ENCODE measurements at regions of chr11 and their contacts with region 1.

Region 1: GRCh38 chr11:7665473-7666291 is 7.6 kb downstream of the CYB5R2 start:
- DNase-seq: peak; percentile 34
- ATAC-seq: peak; percentile 100
- H3K4me3 ChIP-seq: no peak overlapping the region
- H3K27ac ChIP-seq: no peak overlapping the region
- H3K4me1 ChIP-seq: peaks cover 11% of the 10 kb centered on the region
- H3K27me3 ChIP-seq: no peaks in the 10 kb centered on the region
- CTCF ChIP-seq: peak; percentile 94 to 97 (median 96)
- EP300 ChIP-seq: no peak
- POLR2A ChIP-seq: peak; percentile 62
- RAD21 ChIP-seq: peak; percentile 86

Region 2: GRCh38 chr11:7098235-7098832 is 567.3 kb before region 1 on chr11:
- CTCF ChIA-PET with region 1: interaction called, 11 read pairs
- POLR2A ChIA-PET with region 1: no interaction called
- RAD21 ChIA-PET with region 1: interaction called, 9 read pairs
- SMC1A ChIA-PET with region 1: interaction called, 3 read pairs
- in situ Hi-C with region 1: no loop called
- intact Hi-C with region 1: no loop called
- DNase-seq: peak; percentile 40
- ATAC-seq: peak; percentile 95
- H3K4me3 ChIP-seq: no peak overlapping the region
- H3K27ac ChIP-seq: no peak overlapping the region
- H3K4me1 ChIP-seq: no peaks in the 10 kb centered on the region
- H3K27me3 ChIP-seq: no peaks in the 10 kb centered on the region
- CTCF ChIP-seq: peak; percentile 58 to 74 (median 63); a peak in 5 of 6 replicates
- EP300 ChIP-seq: no peak
- POLR2A ChIP-seq: no peak
- RAD21 ChIP-seq: peak; percentile 94

Region 3: DNA sequence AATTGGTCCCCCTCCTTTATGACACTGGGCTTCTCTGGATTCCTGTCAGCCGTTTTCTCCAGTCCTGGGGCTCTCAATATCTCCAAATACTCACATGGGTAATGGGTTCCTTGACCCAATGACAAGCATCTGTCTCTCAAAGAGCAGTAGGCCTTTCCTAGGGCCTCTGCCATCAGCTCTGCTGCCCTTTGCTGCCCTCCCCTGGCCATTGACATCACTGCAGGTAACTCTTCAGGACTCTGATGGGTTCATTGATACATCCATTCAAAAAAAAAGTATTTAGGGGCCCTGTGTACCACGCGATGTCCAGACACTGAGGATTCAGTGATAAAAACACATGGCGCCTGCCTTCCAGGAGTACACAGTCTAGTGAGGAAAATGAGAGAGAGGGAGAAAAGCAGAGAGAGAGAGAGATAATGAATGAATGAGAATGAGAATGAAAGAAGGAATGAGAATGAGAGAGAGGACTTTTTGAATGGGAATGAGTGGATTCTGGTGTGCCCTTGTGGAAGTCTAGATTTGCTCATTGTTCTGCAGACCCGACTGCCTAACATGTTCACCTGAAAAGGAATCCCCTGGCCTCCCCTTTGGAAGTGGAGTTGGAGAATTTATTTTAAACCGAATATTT is 223.0 kb before region 1 on chr11:
- CTCF ChIA-PET with region 1: interaction called, 6 read pairs
- POLR2A ChIA-PET with region 1: no interaction called
- RAD21 ChIA-PET with region 1: interaction called, 15 read pairs
- SMC1A ChIA-PET with region 1: interaction called, 15 read pairs
- in situ Hi-C with region 1: no loop called
- intact Hi-C with region 1: loop called (anchors 2 kb)
- DNase-seq: peak; percentile 30
- ATAC-seq: peak; percentile 98
- H3K4me3 ChIP-seq: no peak overlapping the region
- H3K27ac ChIP-seq: no peak overlapping the region
- H3K4me1 ChIP-seq: no peaks in the 10 kb centered on the region
- H3K27me3 ChIP-seq: no peaks in the 10 kb centered on the region
- CTCF ChIP-seq: peak; percentile 86 to 92 (median 90)
- EP300 ChIP-seq: no peak
- POLR2A ChIP-seq: no peak
- RAD21 ChIP-seq: peak; percentile 98

Region 4: DNA sequence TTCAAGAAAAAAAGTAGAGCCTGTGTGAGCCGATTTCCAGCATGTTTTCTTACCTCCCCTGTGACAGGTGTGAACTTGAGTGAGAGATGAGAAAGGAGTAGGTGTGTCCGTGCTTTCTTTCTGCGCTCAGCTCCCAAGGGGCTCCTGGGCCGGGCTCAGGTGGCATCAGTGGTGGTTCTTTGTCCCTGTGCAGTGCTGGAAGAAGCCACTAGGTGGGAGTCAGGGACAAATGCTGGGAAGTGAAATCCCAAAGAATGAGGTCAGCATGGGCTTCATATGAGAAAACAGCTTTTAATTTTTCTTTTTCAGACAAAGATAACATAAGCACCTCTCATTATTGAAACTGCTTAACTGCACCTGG is 94.1 kb before region 1 on chr11:
- CTCF ChIA-PET with region 1: interaction called, 16 read pairs
- POLR2A ChIA-PET with region 1: no interaction called
- RAD21 ChIA-PET with region 1: interaction called, 8 read pairs
- SMC1A ChIA-PET with region 1: interaction called, 17 read pairs
- in situ Hi-C with region 1: no loop called
- intact Hi-C with region 1: loop called (anchors 5 kb)
- DNase-seq: no peak
- ATAC-seq: peak; percentile 47
- H3K4me3 ChIP-seq: no peak overlapping the region
- H3K27ac ChIP-seq: no peak overlapping the region
- H3K4me1 ChIP-seq: peaks cover 11% of the 10 kb centered on the region
- H3K27me3 ChIP-seq: no peaks in the 10 kb centered on the region
- CTCF ChIP-seq: peak; percentile 58 to 74 (median 69)
- EP300 ChIP-seq: no peak
- POLR2A ChIP-seq: no peak
- RAD21 ChIP-seq: peak; percentile 60; the same call in 1 of the 2 replicates

Region 5: GRCh38 chr11:7585816-7586215 is 79.9 kb before region 1 on chr11:
- CTCF ChIA-PET with region 1: interaction called, 17 read pairs
- POLR2A ChIA-PET with region 1: interaction called, 3 read pairs
- RAD21 ChIA-PET with region 1: no interaction called
- SMC1A ChIA-PET with region 1: no interaction called
- in situ Hi-C with region 1: no loop called
- intact Hi-C with region 1: no loop called
- DNase-seq: no peak
- ATAC-seq: no peak
- H3K4me3 ChIP-seq: no peak overlapping the region
- H3K27ac ChIP-seq: no peak overlapping the region
- H3K4me1 ChIP-seq: 0 out of 2 replicates have a peak, but pooled peaks cover 4% of the 10 kb centered on the region
- H3K27me3 ChIP-seq: no peaks in the 10 kb centered on the region
- CTCF ChIP-seq: no peak
- EP300 ChIP-seq: no peak
- POLR2A ChIP-seq: no peak
- RAD21 ChIP-seq: no peak

Region 6: DNA sequence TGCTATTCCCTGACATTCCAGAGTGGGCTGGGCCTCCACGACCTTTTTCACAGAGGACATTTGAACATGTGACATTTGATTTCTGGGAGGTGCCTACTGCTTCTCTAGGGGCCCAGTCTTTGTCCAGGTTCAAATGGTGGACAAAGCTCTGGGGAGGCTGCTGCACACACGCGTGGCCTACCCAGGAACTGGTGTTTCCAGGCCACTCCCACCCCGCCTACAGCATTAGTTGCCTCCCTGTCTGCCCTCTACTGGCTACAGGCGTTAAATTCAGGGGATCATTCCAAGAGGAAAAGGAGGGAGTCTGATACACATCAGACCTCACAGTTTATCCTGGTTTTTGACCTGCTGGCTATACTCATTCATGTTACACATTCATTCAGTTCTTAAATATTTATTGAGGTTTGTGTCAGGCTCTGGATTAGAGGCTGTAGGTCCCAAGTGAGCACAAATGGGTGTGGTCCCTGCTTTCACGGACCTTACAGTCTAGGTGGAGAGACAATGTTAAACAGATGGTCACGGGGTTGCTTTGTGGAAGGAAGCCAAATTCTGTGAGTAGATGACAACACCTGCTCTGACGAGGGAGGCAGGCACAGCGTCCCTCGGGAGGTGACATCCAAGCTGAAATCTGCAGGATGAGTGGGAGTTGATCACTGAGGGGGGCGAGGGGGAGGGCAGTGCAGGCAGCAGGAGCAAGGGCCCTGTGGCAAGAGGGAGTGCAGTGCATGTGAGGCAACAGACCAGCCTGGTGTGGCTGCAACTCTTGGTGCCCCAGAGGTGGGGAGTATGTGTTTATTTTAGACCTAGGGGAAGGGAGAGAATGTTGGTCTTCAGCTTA is 427.1 kb after region 1 on chr11:
- CTCF ChIA-PET with region 1: no interaction called
- POLR2A ChIA-PET with region 1: no interaction called
- RAD21 ChIA-PET with region 1: no interaction called
- SMC1A ChIA-PET with region 1: no interaction called
- in situ Hi-C with region 1: no loop called
- intact Hi-C with region 1: no loop called
- DNase-seq: no peak
- ATAC-seq: peak; percentile 87
- H3K4me3 ChIP-seq: no peak overlapping the region
- H3K27ac ChIP-seq: no peak overlapping the region
- H3K4me1 ChIP-seq: no peaks in the 10 kb centered on the region
- H3K27me3 ChIP-seq: no peaks in the 10 kb centered on the region
- CTCF ChIP-seq: peak; percentile 44 to 63 (median 62)
- EP300 ChIP-seq: no peak
- POLR2A ChIP-seq: no peak
- RAD21 ChIP-seq: peak; percentile 28; the same call in 1 of the 2 replicates

Measured in GM12878 (cell line).